Lower leg skin (tissue), 4 donors: ENCODE measurements at regions of chr5 and their contacts with region 1.

Region 1: GRCh38 chr5:177154003-177154643 is 20.6 kb downstream of the NSD1 start:
- DNase-seq: peak in 1 of 2 donors; percentile 23
- H3K4me3 ChIP-seq: no peak overlapping the region
- CTCF ChIP-seq: no peak
- POLR2A ChIP-seq: no peak

Region 2: GRCh38 chr5:177124486-177124991 is 29.6 kb before region 1 on chr5:
- intact Hi-C with region 1: loop called (anchors 1 kb)
- DNase-seq: no peak
- H3K4me3 ChIP-seq: no peak overlapping the region
- CTCF ChIP-seq: no peak
- POLR2A ChIP-seq: no peak